Activated CD8-positive, alpha-beta memory T cell treated with anti-CD3 and anti-CD28 coated beads, Interleukin-2, amount 10 ng/mL, durations not matched to agents 7 days and 5 days (primary cell): ENCODE measurements at regions of chr1 and their contacts with region 1.

Region 1: GRCh38 chr1:159798893-159799292 is 3.3 kb upstream of the FCRL6 start:
- DNase-seq: peak; percentile 70
- ATAC-seq: peak; percentile 63
- H3K4me3 Mint-ChIP-seq: no peak overlapping the region
- H3K27ac Mint-ChIP-seq: no peak overlapping the region
- H3K4me1 Mint-ChIP-seq: peaks cover 30% of the 10 kb centered on the region
- H3K27me3 Mint-ChIP-seq: peaks cover 42% of the 10 kb centered on the region

Region 2: DNA sequence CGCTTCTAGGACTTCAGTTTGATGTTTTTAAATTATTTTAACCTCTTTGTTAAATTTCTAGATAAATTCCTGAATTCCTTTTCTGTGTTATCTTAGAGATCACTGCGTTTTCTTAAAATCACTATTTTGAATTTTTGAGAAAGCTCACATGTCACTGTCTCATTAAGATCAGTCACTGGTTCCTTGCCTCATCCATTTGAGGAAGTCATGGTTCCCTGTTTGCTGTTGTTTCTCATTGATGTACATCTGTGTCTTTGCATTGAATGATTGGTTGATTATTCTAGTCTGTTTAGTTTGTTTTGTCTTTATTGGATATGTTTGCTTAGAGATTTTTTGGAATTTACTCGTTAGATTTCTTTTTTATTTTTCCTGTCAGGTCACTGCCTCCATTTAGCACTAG is 134.6 kb before region 1 on chr1:
- CTCF ChIA-PET with region 1: no interaction called
- DNase-seq: no peak
- ATAC-seq: no peak
- H3K4me3 Mint-ChIP-seq: no peak overlapping the region
- H3K27ac Mint-ChIP-seq: no peak overlapping the region
- H3K4me1 Mint-ChIP-seq: no peaks in the 10 kb centered on the region
- H3K27me3 Mint-ChIP-seq: peaks cover 9% of the 10 kb centered on the region

Region 3: DNA sequence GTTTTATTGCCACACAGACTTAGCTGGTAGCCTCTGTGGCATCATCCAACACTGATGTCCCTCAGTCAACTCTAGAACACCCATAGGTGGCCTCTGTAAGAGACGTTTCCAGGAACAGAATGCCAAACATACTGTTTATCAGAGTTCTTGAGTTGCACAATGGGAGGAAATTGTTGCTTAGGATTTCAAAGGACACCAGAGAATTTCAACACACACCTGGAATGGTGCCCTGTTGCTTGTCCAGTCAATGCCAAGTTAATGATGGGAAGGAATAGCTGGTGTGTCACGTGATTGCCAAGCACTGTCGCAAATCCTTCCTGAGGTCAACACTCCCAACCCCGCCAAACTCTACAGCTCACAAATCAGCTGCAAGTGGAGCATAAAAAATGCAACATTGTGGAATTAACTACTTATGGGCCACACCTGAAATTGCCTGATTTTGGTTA is 46.7 kb before region 1 on chr1:
- CTCF ChIA-PET with region 1: no interaction called
- DNase-seq: no peak
- ATAC-seq: no peak
- H3K4me3 Mint-ChIP-seq: no peak overlapping the region
- H3K27ac Mint-ChIP-seq: no peak overlapping the region
- H3K4me1 Mint-ChIP-seq: no peaks in the 10 kb centered on the region
- H3K27me3 Mint-ChIP-seq: peaks cover 4% of the 10 kb centered on the region

Region 4: DNA sequence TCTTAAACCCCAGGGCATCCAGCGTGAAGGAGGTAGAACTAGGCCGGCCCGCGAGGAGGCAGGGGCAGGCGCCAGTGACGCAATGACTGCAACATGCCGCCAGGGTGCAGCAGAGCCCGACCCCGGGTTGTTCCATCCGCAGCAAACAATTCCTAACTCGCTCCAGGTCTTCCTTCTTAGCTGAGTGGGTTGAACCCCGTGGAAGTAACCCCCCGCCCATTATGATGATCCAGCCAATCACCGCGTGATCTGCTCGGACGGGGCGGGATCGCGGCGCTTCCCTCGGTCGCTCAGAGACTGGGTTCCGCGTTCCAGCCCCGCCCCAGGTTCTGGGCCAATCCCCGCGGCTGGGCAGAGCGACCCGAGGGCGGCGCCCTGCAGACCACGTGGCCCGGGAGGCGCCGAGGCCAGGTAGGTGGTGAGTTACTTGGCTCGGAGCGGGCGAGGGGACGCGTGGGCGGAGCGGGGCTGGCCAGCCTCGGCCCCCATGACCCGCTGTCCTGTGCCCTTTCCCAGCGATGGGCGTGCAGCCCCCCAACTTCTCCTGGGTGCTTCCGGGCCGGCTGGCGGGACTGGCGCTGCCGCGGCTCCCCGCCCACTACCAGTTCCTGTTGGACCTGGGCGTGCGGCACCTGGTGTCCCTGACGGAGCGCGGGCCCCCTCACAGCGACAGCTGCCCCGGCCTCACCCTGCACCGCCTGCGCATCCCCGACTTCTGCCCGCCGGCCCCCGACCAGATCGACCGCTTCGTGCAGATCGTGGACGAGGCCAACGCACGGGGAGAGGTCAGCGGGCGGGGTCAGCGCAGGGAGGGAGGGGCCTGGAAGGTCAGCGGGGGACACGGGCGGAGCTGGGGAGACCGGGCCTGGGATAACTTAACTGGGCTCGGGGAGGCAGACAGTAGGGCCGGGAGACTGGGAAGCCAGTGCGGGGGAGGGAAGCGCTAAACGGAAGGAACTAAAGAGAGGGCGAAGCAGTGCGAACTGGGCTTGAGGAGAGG is 18.0 kb before region 1 on chr1 and contains the start of gene DUSP23:
- CTCF ChIA-PET with region 1: interaction called, 45 read pairs
- DNase-seq: peak; percentile 98
- ATAC-seq: peak; percentile 99
- H3K4me3 Mint-ChIP-seq: peak within 1 kb of the TSS; percentile 72
- H3K27ac Mint-ChIP-seq: peak within 1 kb of the TSS; percentile 69
- H3K4me1 Mint-ChIP-seq: peaks cover 20% of the 10 kb centered on the region
- H3K27me3 Mint-ChIP-seq: peaks cover 3% of the 10 kb centered on the region
- total RNA-seq, gene DUSP23: 23.0 to 26.5 TPM

Region 5: DNA sequence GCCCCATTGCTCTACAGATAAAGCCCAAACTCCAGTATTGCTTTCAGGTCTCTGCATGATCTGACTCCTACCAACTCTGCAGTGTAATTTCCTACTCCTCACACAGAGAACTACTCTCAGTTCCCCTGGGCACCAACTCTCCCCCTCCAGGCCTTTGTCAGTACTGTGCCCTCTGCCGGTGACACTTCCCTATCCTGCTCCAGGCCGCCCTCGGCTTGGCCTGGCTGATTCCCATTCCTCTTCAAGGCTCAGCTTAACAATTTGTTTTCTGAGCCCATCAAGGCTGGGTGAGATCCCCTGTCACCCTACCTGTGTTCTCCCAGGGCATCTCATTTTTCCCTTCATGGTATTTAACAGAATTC is 30.4 kb after region 1 on chr1:
- CTCF ChIA-PET with region 1: interaction called, 17 read pairs
- DNase-seq: no peak
- ATAC-seq: no peak
- H3K4me3 Mint-ChIP-seq: no peak overlapping the region
- H3K27ac Mint-ChIP-seq: no peak overlapping the region
- H3K4me1 Mint-ChIP-seq: peaks cover 48% of the 10 kb centered on the region
- H3K27me3 Mint-ChIP-seq: peaks cover 29% of the 10 kb centered on the region

Region 6: GRCh38 chr1:159869173-159869572 is 70.3 kb after region 1 on chr1:
- CTCF ChIA-PET with region 1: interaction called, 10 read pairs
- DNase-seq: peak; percentile 68
- ATAC-seq: peak; percentile 74
- H3K4me3 Mint-ChIP-seq: no peak overlapping the region
- H3K27ac Mint-ChIP-seq: peak overlapping the region; percentile 3
- H3K4me1 Mint-ChIP-seq: peaks cover 22% of the 10 kb centered on the region
- H3K27me3 Mint-ChIP-seq: peaks cover 3% of the 10 kb centered on the region

Region 7: DNA sequence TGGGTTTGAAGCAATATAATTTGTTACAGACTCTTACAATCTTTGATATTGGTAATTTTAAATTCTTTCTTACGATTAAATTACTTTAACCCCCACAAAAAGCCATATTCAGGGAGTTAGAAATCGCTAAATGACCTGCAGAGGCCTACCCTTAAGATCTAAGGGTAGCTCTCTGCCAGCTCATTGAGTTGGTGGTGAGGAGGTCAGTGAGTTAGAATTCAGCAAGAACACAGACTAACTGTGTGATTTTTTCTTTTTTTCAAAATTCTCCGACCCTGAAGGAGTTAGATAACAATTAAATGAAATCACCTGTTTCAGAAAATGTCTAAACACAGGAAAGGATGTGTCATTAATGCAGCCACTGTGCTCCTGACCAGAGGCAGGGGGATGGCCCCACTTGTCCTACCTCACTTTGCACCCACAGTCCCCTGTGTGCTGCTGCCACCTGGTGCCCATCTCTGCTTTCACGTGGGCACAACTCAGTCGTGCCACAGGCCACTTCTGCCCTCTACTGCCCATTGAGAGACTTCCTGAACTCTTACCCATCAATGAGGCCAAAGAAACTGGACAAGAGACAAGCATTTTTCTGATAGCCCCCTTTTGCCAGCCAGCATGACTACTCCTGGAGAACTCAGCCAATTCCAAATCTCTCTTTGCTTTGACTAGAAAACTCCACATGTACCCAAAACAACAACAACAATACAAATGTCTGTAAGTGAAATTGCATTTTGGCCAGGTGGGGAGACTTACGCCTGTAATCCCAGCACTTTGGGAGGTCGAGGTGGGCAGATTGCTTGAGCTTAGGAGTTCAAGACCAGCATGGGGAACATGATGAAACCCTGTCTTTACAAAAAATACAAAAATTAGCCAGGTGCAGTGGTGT is 92.6 kb after region 1 on chr1:
- CTCF ChIA-PET with region 1: interaction called, 430 read pairs
- DNase-seq: peak; percentile 86
- ATAC-seq: peak; percentile 96
- H3K4me3 Mint-ChIP-seq: no peak overlapping the region
- H3K27ac Mint-ChIP-seq: no peak overlapping the region
- H3K4me1 Mint-ChIP-seq: peaks cover 18% of the 10 kb centered on the region
- H3K27me3 Mint-ChIP-seq: peaks cover 4% of the 10 kb centered on the region

Region 8: GRCh38 chr1:160018900-160019299 is 220.0 kb after region 1 on chr1:
- CTCF ChIA-PET with region 1: no interaction called
- DNase-seq: no peak
- ATAC-seq: peak; percentile 45
- H3K4me3 Mint-ChIP-seq: no peak overlapping the region
- H3K27ac Mint-ChIP-seq: peak overlapping the region; percentile 14
- H3K4me1 Mint-ChIP-seq: peaks cover 28% of the 10 kb centered on the region
- H3K27me3 Mint-ChIP-seq: no peaks in the 10 kb centered on the region